Left cardiac atrium (tissue), 4 donors: ENCODE measurements at regions of chr4 and their contacts with region 1.

Region 1: GRCh38 chr4:139171876-139172691 is 4.9 kb downstream of the ELF2 start:
- DNase-seq: no peak
- ATAC-seq: no peak

Region 2: DNA sequence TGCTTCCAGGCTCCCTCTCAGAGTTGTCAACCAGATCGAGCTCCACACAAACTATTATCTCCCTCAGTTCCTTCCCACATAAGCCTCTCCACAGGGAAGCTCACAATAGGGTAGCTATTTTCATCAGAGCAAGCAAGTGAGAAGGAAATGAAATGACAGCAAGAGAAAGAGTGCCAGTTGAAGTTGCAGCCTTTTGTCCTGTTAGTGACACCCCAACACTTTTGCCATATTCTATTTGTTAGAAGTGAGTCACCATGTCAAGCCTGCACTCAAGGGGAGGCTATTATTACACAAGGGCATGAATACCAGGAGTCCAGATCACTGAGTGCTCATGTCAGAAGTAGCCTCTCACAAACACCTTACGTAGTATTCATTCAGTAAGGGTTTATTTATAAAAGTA is 422.8 kb before region 1 on chr4:
- intact Hi-C with region 1: no loop called
- DNase-seq: no peak
- ATAC-seq: peak; percentile 78 to 96

Region 3: DNA sequence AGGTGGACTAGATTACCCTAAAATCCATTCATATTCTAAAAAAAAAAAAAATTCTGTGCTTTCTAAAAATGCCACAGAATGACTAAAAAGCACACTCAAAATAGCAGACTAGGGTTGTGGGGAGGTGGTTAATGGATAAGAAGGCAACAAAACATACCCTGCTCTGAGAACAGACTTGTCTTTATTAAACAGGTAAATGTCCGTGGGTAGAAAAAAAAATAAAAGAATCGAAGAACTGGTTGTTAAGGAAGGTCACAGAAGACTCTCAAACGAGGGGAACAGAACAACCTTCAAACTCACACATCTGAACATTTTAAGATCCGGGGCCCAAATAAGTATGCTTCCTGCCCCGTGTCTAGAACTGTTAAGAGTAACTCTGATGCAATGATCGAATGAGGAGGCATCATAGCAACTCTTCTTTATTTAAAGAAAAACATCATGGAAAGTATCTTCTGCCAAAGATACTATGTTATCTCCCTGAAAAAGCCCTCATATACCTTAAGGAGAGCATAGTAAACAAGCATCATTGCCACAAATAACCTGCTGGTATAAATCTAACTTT is 63.4 kb before region 1 on chr4:
- intact Hi-C with region 1: loop called in 1 of 2 experiments (anchors 5 kb)
- DNase-seq: no peak
- ATAC-seq: no peak